Caco-2 (cell line): ENCODE measurements at regions of chr3 and their contacts with region 1.

Region 1: GRCh38 chr3:9362731-9363530 is at the start of gene THUMPD3:
- DNase-seq: peak; percentile 92
- H3K4me3 ChIP-seq: peak within 1 kb of the TSS; percentile 52
- H3K4me3 Mint-ChIP-seq: peak within 1 kb of the TSS; percentile 99
- H3K27ac Mint-ChIP-seq: peak within 1 kb of the TSS; percentile 99
- H3K4me1 ChIP-seq: peaks cover 15% of the 10 kb centered on the region; the same call in 1 of the 2 replicates
- H3K4me1 Mint-ChIP-seq: peaks cover 13% of the 10 kb centered on the region
- H3K27me3 ChIP-seq: no peaks in the 10 kb centered on the region
- H3K27me3 Mint-ChIP-seq: no peaks in the 10 kb centered on the region
- CTCF ChIP-seq: no peak
- total RNA-seq, gene THUMPD3: 56.0 and 62.2 TPM in 2 replicates

Region 2: DNA sequence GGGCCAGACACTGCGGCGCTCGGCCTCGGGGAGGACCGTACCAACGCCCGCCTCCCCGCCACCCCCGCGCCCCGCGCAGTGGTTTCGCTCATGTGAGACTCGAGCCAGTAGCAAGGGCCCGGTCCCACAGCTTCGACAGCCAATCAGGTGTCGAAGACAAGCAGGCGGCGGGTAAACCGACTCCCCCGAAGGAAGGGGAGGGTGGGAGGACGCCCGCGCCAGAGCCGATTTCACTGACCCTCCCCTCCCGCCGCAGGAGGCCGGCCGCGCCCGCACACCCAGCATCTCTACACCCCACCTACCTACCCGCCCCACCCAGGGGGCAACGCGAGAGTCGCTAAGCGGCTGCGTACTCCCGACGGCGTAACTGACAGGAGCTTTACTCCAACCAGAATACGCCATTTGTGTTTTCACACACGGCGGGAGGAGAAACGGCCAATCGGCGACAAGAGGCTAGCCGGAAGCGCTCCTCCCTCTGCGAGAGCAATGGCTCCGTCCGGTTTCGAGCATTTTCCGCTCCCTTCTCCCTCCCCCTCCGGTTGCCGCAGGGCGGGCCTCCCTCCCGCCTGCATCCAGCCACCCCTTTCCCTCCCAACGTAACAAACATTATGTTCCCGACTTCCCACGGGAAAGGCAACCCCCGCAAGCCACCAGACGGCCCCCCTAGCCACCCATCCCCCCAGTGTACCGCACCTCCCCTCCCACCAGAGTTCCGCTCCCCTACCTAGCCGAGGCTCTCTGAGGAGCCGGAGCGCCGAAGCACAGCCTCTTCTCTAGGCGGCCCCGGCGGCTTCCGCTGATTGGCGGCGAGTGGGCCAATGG is 34.0 kb after region 1 on chr3:
- CTCF ChIA-PET with region 1: interaction called, 6 read pairs
- POLR2A ChIA-PET with region 1: interaction called, 49 read pairs
- intact Hi-C with region 1: loop called (anchors 1 kb)
- DNase-seq: peak; percentile 99
- H3K4me3 ChIP-seq: peak overlapping the region; percentile 91
- H3K4me3 Mint-ChIP-seq: peak overlapping the region; percentile 94
- H3K27ac Mint-ChIP-seq: peak overlapping the region; percentile 95
- H3K4me1 ChIP-seq: peaks cover 32% of the 10 kb centered on the region
- H3K4me1 Mint-ChIP-seq: peaks cover 19% of the 10 kb centered on the region
- H3K27me3 ChIP-seq: no peaks in the 10 kb centered on the region
- H3K27me3 Mint-ChIP-seq: no peaks in the 10 kb centered on the region
- CTCF ChIP-seq: no peak